ENCODE measurements at regions of chr1 and their contacts with region 1.

Region 1: GRCh38 chr1:23772049-23772853 is 6.0 kb upstream of the PITHD1 start:
- DNase-seq: peak; percentile 66
- H3K4me3 ChIP-seq: no peak overlapping the region
- H3K27ac ChIP-seq: no peak overlapping the region
- H3K4me1 ChIP-seq: peaks cover 2% of the 10 kb centered on the region
- H3K27me3 ChIP-seq: no peaks in the 10 kb centered on the region
- CTCF ChIP-seq: peak; percentile 97 to 99

Region 2: GRCh38 chr1:23699280-23700179 is 72.7 kb before region 1 on chr1:
- CTCF ChIA-PET with region 1: no interaction called
- dilution Hi-C with region 1: loop called (anchors 5 kb)
- in situ Hi-C with region 1: no loop called
- intact Hi-C with region 1: no loop called
- DNase-seq: peak; percentile 74
- H3K4me3 ChIP-seq: no peak overlapping the region
- H3K27ac ChIP-seq: no peak overlapping the region
- H3K4me1 ChIP-seq: peaks cover 34% of the 10 kb centered on the region
- H3K27me3 ChIP-seq: no peaks in the 10 kb centered on the region
- CTCF ChIP-seq: no peak

Region 3: DNA sequence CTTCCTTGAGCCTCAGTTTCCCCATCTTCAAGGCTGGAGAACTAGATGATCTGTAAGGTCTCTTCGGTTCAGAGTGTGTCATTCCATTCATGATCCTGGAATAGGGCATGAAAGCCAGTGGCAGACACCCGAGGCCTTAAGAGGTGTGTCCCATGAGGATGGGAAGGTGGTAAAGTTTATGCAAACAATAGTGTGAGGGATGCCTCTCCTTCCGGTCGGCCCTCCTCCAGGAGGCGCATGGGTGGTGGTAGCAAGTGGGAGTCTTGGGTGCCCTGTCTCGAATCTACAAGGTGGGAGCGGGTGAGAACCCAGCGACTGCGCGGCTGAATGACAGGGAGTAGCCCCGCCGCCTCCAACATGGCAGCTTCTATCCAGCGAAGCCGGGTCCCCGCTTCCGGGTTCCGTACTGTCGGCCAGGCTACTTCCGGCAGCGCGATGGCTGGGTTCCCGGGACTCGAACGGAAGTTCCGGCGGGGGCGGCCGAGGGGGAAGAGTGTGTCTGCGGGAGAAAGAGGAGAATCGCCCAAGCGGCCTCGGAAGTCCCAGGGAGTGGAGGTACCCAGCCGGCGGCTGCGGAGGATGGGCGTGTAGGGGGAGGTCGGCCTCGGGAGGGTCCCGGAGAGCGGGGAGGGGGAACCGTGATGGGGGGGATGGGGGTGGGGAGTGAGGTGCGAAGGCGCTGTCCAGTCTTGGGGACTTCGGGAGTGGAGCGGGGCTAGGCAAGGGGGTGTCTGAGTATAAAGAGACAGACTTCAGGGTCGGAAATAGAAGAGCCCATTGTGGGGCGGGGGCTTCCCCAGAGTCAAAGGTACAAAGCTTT is 18.7 kb after region 1 on chr1 and contains the start of gene LYPLA2:
- CTCF ChIA-PET with region 1: interaction called, 3 read pairs
- dilution Hi-C with region 1: no loop called
- in situ Hi-C with region 1: no loop called
- intact Hi-C with region 1: loop called (anchors 2 kb)
- DNase-seq: peak; percentile 87
- H3K4me3 ChIP-seq: peak within 1 kb of the TSS; percentile 64 to 75 (median 68)
- H3K27ac ChIP-seq: peak within 1 kb of the TSS; percentile 45
- H3K4me1 ChIP-seq: peaks cover 35% of the 10 kb centered on the region
- H3K27me3 ChIP-seq: no peaks in the 10 kb centered on the region
- CTCF ChIP-seq: no peak
- total RNA-seq, gene LYPLA2: 81.5 to 89.8 TPM

Region 4: GRCh38 chr1:23845163-23845562 is 72.9 kb after region 1 on chr1:
- CTCF ChIA-PET with region 1: no interaction called
- dilution Hi-C with region 1: no loop called
- in situ Hi-C with region 1: no loop called
- intact Hi-C with region 1: no loop called
- DNase-seq: no peak
- H3K4me3 ChIP-seq: no peak overlapping the region
- H3K27ac ChIP-seq: no peak overlapping the region
- H3K4me1 ChIP-seq: no peaks in the 10 kb centered on the region
- H3K27me3 ChIP-seq: no peaks in the 10 kb centered on the region
- CTCF ChIP-seq: no peak

Region 5: GRCh38 chr1:24027838-24028468 is 255.7 kb after region 1 on chr1:
- CTCF ChIA-PET with region 1: no interaction called
- dilution Hi-C with region 1: no loop called
- in situ Hi-C with region 1: no loop called
- intact Hi-C with region 1: loop called (anchors 1 kb)
- DNase-seq: peak; percentile 47
- H3K4me3 ChIP-seq: no peak overlapping the region
- H3K27ac ChIP-seq: no peak overlapping the region
- H3K4me1 ChIP-seq: peaks cover under 1% of the 10 kb centered on the region
- H3K27me3 ChIP-seq: no peaks in the 10 kb centered on the region
- CTCF ChIP-seq: peak; percentile 58 to 66

Measured in mammary epithelial cell (primary cell).